Left ventricle myocardium inferior (tissue), 1 donor: ENCODE measurements at regions of chr11 and their contacts with region 1.

Region 1: DNA sequence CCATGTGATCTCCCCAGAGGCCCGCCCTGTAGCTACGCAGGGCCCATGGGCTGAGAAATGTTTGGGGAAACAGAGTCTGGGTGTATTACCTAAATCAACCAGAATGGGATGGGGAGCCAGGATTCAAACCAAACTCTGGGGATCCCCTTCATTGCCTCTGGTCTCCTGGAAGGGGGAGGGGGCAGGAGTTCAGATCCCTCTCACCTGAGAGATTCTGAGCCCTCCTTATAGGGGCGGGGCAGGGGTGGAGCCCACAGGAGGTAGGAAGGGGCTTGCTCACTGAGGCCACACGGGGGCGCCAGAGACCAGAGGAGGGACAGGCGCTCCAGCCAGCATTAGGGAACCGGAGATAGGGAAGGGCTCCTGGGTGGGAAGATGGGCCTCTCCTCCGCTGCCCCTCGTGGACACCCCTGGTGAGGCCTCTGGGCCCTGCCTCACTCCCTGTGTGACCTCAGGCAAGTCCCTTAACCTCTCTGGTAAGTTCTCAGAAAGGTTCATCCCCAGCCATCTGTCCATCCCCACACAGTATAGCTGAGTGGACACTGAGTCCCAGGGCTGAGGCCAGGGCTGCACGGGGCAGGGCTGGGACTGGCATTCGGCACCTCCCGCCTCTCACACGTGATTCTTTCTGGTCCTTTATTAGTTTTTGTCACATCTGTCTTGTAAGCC is 2.7 kb upstream of the CDC42BPG start:
- DNase-seq: peak; percentile 91
- H3K4me3 ChIP-seq: no peak overlapping the region
- H3K27ac ChIP-seq: peak overlapping the region; percentile 93
- H3K4me1 ChIP-seq: peaks cover 64% of the 10 kb centered on the region
- H3K27me3 ChIP-seq: no peaks in the 10 kb centered on the region
- CTCF ChIP-seq: peak; percentile 99

Region 2: DNA sequence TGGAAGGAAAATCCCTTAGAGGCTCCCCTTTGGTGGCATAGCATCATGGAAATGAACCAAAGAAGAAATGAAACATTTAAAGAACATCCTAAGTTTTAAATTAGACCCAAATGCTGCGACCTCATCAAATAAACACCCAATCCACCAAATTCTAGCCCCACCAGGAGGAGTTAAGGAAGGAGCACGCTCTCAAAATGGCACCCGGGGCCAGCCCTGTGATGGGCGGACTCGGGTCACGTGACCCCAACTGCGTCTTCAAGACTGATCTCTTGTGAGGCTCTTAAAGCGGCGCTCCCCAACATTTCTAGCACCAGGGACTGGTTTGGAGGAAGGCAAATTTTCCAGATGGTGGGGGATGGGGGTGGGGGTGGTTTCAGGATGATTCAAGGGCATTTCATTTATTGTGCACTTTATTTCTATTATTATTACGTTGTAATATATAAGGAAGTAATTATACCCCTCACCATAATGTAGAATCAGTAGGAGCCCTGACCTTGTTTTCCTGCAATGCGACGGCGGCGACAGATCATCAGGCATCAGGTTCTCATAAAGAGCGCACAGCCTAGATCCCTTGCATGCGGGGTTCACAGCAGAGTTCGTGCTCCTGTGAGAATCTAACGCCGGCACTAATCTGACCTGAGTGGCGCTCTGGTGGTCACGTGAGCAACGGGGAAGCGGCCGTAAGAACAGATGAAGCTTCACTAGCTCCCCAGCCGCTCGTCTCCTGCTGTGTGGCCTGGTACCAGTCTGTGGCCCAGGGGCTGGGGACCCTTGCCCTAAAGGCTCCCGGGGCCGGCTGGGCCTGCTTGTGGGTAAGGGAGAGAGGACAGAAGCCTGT is 346.7 kb before region 1 on chr11:
- intact Hi-C with region 1: no loop called
- DNase-seq: no peak
- H3K4me3 ChIP-seq: no peak overlapping the region
- H3K27ac ChIP-seq: no peak overlapping the region
- H3K4me1 ChIP-seq: no peaks in the 10 kb centered on the region
- H3K27me3 ChIP-seq: peaks cover 96% of the 10 kb centered on the region
- CTCF ChIP-seq: no peak

Region 3: GRCh38 chr11:64894070-64894796 is 47.1 kb after region 1 on chr11:
- intact Hi-C with region 1: loop called (anchors 2 kb)
- DNase-seq: peak; percentile 91
- H3K4me3 ChIP-seq: no peak overlapping the region
- H3K27ac ChIP-seq: peak overlapping the region; percentile 79
- H3K4me1 ChIP-seq: peaks cover 46% of the 10 kb centered on the region
- H3K27me3 ChIP-seq: no peaks in the 10 kb centered on the region
- CTCF ChIP-seq: peak; percentile 95

Region 4: GRCh38 chr11:64905516-64906313 is 58.6 kb after region 1 on chr11:
- intact Hi-C with region 1: no loop called
- DNase-seq: no peak
- H3K4me3 ChIP-seq: no peak overlapping the region
- H3K27ac ChIP-seq: no peak overlapping the region
- H3K4me1 ChIP-seq: no peaks in the 10 kb centered on the region
- H3K27me3 ChIP-seq: no peaks in the 10 kb centered on the region
- CTCF ChIP-seq: no peak

Region 5: GRCh38 chr11:64996710-64997380 is 149.7 kb after region 1 on chr11 and contains the start of gene BATF2:
- intact Hi-C with region 1: no loop called
- DNase-seq: peak; percentile 70
- H3K4me3 ChIP-seq: peak within 1 kb of the TSS; percentile 63
- H3K27ac ChIP-seq: peak within 1 kb of the TSS; percentile 79
- H3K4me1 ChIP-seq: peaks cover 35% of the 10 kb centered on the region
- H3K27me3 ChIP-seq: no peaks in the 10 kb centered on the region
- CTCF ChIP-seq: peak; percentile 53
- total RNA-seq, gene BATF2: 1.3 TPM

Region 6: GRCh38 chr11:65078151-65078550 is 231.0 kb after region 1 on chr11:
- intact Hi-C with region 1: no loop called
- DNase-seq: no peak
- H3K4me3 ChIP-seq: no peak overlapping the region
- H3K27ac ChIP-seq: no peak overlapping the region
- H3K4me1 ChIP-seq: peaks cover 1% of the 10 kb centered on the region
- H3K27me3 ChIP-seq: no peaks in the 10 kb centered on the region
- CTCF ChIP-seq: peak; percentile 66